Activated T-helper 1 cell treated with anti-CD3 and anti-CD28 coated beads, Interleukin-12 subunit alpha, Interleukin-12 subunit beta, Interleukin-2, Interleukin-4 antibody, amounts not matched to agents 30 ng/mL and 10 ng/mL and 1 ng/mL, durations not matched to agents 14 hours and 24 hours and 36 hours (primary cell): ENCODE measurements at regions of chr12 and their contacts with region 1.

Region 1: GRCh38 chr12:10721651-10722501 is 1.2 kb downstream of the YBX3 start:
- DNase-seq: peak; percentile 53
- H3K4me3 Mint-ChIP-seq: peak overlapping the region; percentile 96
- H3K27ac Mint-ChIP-seq: peak overlapping the region; percentile 96
- H3K4me1 Mint-ChIP-seq: peaks cover 60% of the 10 kb centered on the region
- H3K27me3 Mint-ChIP-seq: peaks cover 34% of the 10 kb centered on the region

Region 2: GRCh38 chr12:9760699-9761418 is 961.0 kb before region 1 on chr12 and contains the start of gene CD69:
- intact Hi-C with region 1: loop called (anchors 5 kb)
- DNase-seq: peak; percentile 81
- H3K4me3 Mint-ChIP-seq: peak within 1 kb of the TSS; percentile 98
- H3K27ac Mint-ChIP-seq: peak within 1 kb of the TSS; percentile 97
- H3K4me1 Mint-ChIP-seq: peaks cover 68% of the 10 kb centered on the region
- H3K27me3 Mint-ChIP-seq: peaks cover 6% of the 10 kb centered on the region
- total RNA-seq, gene CD69: 90.5 and 93.2 TPM in 2 replicates

Region 3: DNA sequence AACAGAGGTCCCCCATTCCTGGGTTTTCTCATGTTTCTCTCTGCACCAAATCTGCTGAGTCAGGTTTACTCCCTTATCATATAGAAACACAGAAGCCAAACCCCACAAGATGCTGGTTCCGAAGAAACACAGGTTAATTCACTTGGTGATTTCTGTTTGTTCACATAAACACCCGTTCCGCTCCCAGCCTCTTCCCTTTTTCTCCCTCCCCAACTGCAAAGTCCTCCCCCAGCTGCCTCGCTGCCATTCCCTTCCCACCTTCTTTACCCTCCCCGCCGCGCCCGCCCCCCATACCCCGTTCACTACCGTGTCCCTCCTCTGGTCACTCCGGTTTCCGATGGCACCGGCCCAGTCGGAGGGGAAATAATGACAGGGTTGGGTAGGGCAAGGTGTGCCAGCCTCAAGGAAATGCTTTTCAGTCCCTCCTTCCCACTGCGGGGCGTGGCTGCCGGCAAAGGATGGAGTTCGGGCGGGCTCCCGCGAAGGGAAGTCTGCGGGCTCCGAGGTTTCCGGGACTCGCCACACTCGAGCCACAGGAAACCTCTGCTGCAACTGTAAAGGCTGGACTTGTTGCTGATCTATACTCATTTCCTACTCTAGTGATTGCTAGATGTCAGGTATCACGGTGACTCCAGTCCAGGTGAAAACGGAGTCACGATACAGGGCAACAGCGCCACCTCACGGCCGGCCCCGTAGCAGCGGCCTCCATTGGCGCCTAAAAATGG is 48.1 kb before region 1 on chr12 and contains the start of gene STYK1:
- intact Hi-C with region 1: loop called (anchors 2 kb)
- DNase-seq: peak; percentile 73
- H3K4me3 Mint-ChIP-seq: peak within 1 kb of the TSS; percentile 86
- H3K27ac Mint-ChIP-seq: peak within 1 kb of the TSS; percentile 72
- H3K4me1 Mint-ChIP-seq: peaks cover 74% of the 10 kb centered on the region
- H3K27me3 Mint-ChIP-seq: peaks cover 35% of the 10 kb centered on the region
- total RNA-seq, gene STYK1: 0.34 TPM in 1 of 2 replicates, not detected in the other

Region 4: DNA sequence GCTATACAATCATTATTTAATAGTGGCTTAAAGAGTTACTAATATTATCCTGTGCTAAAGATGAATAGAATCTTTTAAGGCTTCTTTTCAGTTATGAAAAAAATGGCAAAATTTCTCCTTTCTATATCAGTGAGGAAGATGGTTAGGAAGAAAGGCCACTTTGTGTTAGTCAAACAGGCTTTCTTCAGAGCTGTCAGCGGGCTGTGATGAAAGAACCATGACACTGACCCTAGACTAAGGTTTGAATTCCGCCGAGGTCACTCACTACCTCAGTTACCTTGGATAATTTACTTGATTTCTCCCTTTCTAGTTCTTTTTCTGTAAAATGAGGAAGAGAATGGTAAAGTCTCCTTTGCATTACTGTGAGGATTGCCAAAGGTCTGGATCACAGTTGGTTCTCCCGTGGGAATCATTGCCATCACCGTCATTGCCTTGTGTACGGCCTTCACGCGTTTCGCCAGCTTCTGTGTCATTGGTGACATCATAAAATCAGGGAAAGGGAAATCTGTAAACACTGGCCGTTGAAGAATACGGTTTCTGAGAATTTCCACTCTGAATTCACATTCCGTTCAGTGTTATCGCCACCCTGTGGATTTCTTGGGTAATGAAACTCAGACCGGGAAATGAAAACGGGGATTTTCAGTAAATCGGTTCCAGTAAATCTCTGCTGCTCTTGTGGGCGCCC is 28.0 kb after region 1 on chr12:
- intact Hi-C with region 1: loop called (anchors 1 kb)
- DNase-seq: peak; percentile 66
- H3K4me3 Mint-ChIP-seq: peak overlapping the region; percentile 62
- H3K27ac Mint-ChIP-seq: peak overlapping the region; percentile 34
- H3K4me1 Mint-ChIP-seq: peaks cover 36% of the 10 kb centered on the region
- H3K27me3 Mint-ChIP-seq: peaks cover 24% of the 10 kb centered on the region

Region 5: GRCh38 chr12:12356886-12357718 is 1635.2 kb after region 1 on chr12 and contains the start of gene BORCS5:
- intact Hi-C with region 1: loop called (anchors 2 kb)
- DNase-seq: peak; percentile 98
- H3K4me3 Mint-ChIP-seq: peak within 1 kb of the TSS; percentile 97
- H3K27ac Mint-ChIP-seq: peak within 1 kb of the TSS; percentile 96
- H3K4me1 Mint-ChIP-seq: peaks cover 48% of the 10 kb centered on the region
- H3K27me3 Mint-ChIP-seq: no peaks in the 10 kb centered on the region
- total RNA-seq, gene BORCS5: 34.5 and 39.6 TPM in 2 replicates